Heart right ventricle (tissue), 16 donors: ENCODE measurements at regions of chr13 and their contacts with region 1.

Region 1: DNA sequence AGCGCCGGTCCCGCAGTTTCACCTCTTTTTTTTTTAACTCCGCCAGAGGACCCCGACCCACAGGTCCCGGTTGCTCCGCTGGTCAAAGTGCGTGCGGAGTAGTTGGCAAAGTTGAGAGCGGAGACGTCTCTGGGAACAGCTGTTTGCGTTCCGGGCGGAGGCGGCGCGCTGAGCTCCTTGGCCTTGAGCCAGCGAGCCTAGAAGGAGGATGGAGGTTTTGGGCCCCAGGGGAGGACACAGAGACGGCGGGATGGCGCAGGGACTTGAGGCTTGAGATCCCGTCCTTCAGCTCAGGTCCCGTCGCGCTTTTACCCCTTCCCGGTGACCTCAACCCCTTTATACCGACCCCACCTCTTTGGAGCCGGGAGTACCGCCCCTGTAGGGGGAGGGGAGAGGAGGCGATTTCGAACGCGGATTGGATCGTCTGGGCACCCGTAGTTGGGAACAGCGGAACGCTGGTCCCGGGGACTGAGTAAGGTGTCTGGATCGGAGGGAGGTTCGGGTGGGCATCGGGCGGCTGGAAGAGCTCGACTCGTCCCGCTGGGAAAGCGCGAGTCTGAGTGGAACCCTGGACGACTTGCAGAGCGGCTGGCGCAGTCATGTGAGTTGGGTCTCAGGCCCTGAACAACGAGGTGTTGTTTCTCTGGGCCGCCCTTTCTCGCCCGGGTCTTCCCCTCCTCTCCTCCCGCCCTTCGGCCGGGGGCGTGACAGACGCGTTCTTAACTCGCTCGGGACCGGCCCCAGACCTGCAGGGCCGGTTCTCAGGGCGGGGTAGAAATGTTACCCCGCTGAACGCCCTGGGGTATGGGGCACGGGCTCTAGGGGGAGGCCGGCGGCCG is at the start of gene WBP4:
- DNase-seq: peak; percentile 94 to 97
- ATAC-seq: peak; percentile 82 to 93 (median 88)
- H3K4me3 ChIP-seq: peak within 1 kb of the TSS; percentile 42 to 94 (median 81)
- H3K27ac ChIP-seq: peak within 1 kb of the TSS; percentile 87 to 98 (median 98)
- H3K4me1 ChIP-seq: peaks cover 0 to 77% (median 72%) of the 10 kb centered on the region in 9 donors
- H3K27me3 ChIP-seq: no peaks in the 10 kb centered on the region
- CTCF ChIP-seq: peak in 4 of 9 donors; percentile 24 to 46 (median 36)
- total RNA-seq, gene WBP4: 13.0 to 24.4 (median 21.8) TPM

Region 2: DNA sequence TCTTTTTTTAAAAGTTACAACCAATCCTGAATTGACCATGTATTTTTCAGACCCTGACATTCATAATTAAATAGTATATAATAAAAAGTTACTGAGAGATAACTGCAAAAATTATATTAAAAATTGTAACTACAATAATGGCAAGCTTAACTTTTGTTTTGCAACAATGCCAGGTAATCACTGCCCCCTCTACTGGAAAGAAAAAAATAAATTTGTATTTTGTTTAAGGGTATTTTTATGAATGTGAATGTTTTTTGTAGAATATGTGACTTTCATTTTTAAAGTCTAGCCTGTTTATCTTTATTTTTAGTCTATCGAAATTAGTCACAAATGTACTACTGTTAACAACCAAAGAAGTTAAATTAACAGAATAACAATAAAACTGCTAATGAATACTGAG is 312.0 kb before region 1 on chr13:
- intact Hi-C with region 1: no loop called
- DNase-seq: no peak
- ATAC-seq: no peak
- H3K4me3 ChIP-seq: no peak overlapping the region
- H3K27ac ChIP-seq: no peak overlapping the region
- H3K4me1 ChIP-seq: no peaks in the 10 kb centered on the region
- H3K27me3 ChIP-seq: no peaks in the 10 kb centered on the region
- CTCF ChIP-seq: peak in 4 of 9 donors; percentile 18 to 38 (median 24)

Region 3: GRCh38 chr13:40789275-40790133 is 271.8 kb before region 1 on chr13 and contains the start of gene SLC25A15:
- intact Hi-C with region 1: loop called in 3 of 10 experiments (anchors 5 to 10 kb)
- DNase-seq: peak; percentile 77 to 84
- ATAC-seq: peak; percentile 89 to 96 (median 94)
- H3K4me3 ChIP-seq: peak within 1 kb of the TSS; percentile 42 to 85 (median 70)
- H3K27ac ChIP-seq: peak within 1 kb of the TSS; percentile 1 to 92 (median 84)
- H3K4me1 ChIP-seq: peaks cover 0 to 19% (median 10%) of the 10 kb centered on the region in 9 donors
- H3K27me3 ChIP-seq: no peaks in the 10 kb centered on the region
- CTCF ChIP-seq: peak in 5 of 9 donors; percentile 38 to 55 (median 53)
- total RNA-seq, gene SLC25A15: 3.3 to 6.0 (median 4.9) TPM

Region 4: DNA sequence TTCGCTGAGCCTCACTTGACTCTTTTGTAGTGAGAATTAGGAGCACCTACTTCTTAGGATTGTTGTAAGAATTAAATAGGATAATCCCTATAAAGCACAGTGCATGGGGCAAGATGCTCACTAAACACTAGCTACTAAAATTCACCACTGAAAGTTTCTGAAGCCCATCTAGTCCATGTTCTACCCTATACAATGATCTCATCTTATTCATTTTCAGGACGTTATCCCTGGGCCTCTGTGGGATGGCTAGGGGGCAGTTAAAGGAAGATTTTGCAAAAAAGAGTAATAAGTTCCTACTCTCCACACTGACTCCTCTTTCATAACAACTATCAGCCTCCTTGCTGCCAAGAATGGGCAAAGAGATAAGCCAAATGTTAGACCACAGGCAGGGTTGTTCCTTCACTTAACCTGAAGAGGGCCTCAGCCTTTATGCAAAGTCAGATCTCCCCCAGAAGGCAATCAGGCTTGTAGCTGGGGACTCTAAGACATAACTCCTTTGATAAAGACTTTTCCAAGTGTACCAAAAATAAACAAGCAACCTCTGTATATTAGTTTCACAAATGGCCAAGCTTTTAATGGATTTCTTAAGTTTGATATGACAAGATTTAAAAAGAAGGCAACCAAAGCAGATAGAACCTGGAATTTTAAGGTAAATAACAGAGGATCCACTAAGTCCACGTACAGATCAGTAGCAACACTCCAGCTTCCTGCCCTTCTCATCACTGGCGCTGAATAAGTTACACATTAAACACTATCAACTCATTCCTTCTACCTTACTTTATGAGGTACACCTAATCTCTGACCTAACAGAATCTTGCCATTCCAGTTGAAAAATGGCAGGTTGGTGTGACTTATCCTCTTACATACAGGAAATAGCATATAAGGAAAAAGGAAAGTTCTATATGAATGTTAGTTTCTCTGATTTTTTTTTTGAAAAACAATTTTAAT is 86.6 kb before region 1 on chr13:
- intact Hi-C with region 1: loop called in 1 of 10 experiments (anchors 5 kb)
- DNase-seq: no peak
- ATAC-seq: peak; percentile 44 to 77 (median 67)
- H3K4me3 ChIP-seq: no peak overlapping the region
- H3K27ac ChIP-seq: peak overlapping the region in 2 of 10 donors; percentile 13 to 33
- H3K4me1 ChIP-seq: peaks cover 9 to 99% (median 85%) of the 10 kb centered on the region in 9 donors
- H3K27me3 ChIP-seq: no peaks in the 10 kb centered on the region
- CTCF ChIP-seq: peak in 7 of 9 donors; percentile 31 to 58 (median 49)

Region 5: DNA sequence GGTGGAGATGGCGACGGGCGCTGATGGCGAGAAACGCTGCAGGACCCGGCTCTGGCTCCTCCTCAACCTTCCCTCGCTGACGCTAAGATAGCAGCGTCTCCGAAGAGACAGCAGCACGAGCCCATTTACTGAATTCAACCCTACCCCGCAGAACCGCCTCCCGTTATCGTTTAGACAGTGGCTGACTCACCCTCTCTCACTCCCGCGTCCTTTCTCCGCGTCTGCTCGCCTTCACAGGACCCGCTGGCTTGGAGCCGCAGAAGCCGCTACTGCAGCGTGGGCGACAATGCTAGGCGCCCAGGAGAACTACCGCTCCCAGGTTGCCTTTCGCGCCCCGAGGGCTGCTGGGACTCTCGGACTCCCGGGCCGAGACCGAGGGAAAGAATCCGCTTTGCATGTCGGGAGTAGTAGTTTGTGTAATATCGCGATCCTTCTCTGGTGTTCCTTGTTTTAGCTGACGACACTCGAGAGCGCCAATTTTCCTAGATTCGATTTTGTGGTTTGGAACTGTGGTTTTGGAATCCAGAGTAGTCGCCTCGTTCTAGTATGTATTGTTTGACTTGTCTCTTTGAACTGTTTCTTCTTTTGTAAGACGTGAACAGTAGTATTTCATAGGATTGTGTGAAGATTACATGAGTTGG is 71.3 kb after region 1 on chr13 and contains the start of gene KBTBD6:
- intact Hi-C with region 1: loop called in 2 of 10 experiments (anchors 5 kb)
- DNase-seq: peak; percentile 93 to 96
- ATAC-seq: peak; percentile 99
- H3K4me3 ChIP-seq: peak within 1 kb of the TSS; percentile 46 to 88 (median 74)
- H3K27ac ChIP-seq: peak within 1 kb of the TSS in 9 of 10 donors; percentile 72 to 90 (median 85)
- H3K4me1 ChIP-seq: peaks cover 0 to 54% (median 48%) of the 10 kb centered on the region in 9 donors
- H3K27me3 ChIP-seq: no peaks in the 10 kb centered on the region
- CTCF ChIP-seq: no peak
- total RNA-seq, gene KBTBD6: 5.4 to 10.6 (median 6.9) TPM

Region 6: DNA sequence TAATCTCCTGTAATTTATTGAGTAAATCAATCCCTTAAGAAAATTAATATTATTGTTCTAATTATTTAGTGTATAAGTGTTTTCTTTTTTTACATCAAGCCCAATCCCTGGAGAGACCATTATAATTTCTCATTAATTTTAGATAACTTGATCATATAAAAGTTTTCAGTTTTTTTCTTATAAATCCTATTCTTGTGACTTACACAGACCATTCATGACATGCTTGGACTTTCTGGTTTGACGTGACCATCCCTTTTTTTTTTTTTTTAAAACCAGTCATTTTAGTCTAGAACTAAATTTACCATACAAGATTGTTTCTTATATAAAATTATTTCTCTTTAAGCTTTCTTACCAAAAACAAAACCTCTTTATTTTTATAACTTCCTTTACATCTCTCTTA is 207.5 kb after region 1 on chr13:
- intact Hi-C with region 1: no loop called
- DNase-seq: no peak
- ATAC-seq: no peak
- H3K4me3 ChIP-seq: no peak overlapping the region
- H3K27ac ChIP-seq: no peak overlapping the region
- H3K4me1 ChIP-seq: peaks cover 0 to 2% (median 0%) of the 10 kb centered on the region in 9 donors
- H3K27me3 ChIP-seq: no peaks in the 10 kb centered on the region
- CTCF ChIP-seq: no peak

Region 7: GRCh38 chr13:41310963-41311606 is 249.8 kb after region 1 on chr13 and contains the start of gene NAA16:
- intact Hi-C with region 1: loop called in 1 of 10 experiments (anchors 10 kb)
- DNase-seq: peak; percentile 94 to 96
- ATAC-seq: peak; percentile 96 to 98 (median 96)
- H3K4me3 ChIP-seq: peak within 1 kb of the TSS; percentile 71 to 100 (median 97)
- H3K27ac ChIP-seq: peak within 1 kb of the TSS; percentile 77 to 96 (median 92)
- H3K4me1 ChIP-seq: peaks cover 0 to 46% (median 34%) of the 10 kb centered on the region in 9 donors
- H3K27me3 ChIP-seq: no peaks in the 10 kb centered on the region
- CTCF ChIP-seq: peak in 3 of 9 donors; percentile 6 to 18 (median 9)
- total RNA-seq, gene NAA16: 5.6 to 10.3 (median 8.5) TPM